Activated CD4-positive, alpha-beta memory T cell treated with anti-CD3 and anti-CD28 coated beads, Interleukin-2, amount 10 ng/mL, durations not matched to agents 7 days and 5 days (primary cell): ENCODE measurements at regions of chr4 and their contacts with region 1.

Region 1: GRCh38 chr4:47122592-47123291 is 91.4 kb downstream of the GABRB1 start:
- DNase-seq: peak; percentile 52
- H3K4me3 Mint-ChIP-seq: no peak overlapping the region
- H3K27ac Mint-ChIP-seq: no peak overlapping the region
- H3K4me1 Mint-ChIP-seq: no peaks in the 10 kb centered on the region
- H3K27me3 Mint-ChIP-seq: no peaks in the 10 kb centered on the region

Region 2: DNA sequence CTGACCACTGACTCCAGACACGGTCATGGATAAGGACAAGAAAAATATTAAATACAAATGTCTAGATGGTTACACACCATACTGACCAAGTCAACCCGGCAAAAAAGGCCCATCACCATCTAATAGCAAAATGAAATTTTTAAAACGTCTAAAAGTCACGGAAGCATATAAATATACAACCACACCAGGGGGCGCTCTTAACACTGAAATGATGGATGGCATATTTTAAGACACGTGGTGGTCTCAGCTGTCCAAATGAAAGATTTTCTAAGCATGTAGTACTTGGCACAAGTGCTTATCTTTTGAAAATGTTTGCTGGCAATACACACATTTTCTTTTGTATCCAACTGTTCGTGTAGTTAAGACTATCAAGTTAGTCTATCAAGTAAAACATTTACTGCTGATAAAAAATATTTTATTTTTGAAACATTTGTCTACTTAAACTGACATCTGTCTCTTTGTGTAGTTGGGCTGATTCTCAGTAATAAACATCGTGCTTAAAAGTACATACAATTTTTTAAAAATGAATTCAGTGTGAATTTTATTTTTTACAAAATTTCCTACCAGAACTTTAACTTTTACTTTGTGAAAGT is 278.3 kb before region 1 on chr4:
- CTCF ChIA-PET with region 1: interaction called, 10 read pairs
- POLR2A ChIA-PET with region 1: no interaction called
- DNase-seq: peak; percentile 35
- H3K4me3 Mint-ChIP-seq: no peak overlapping the region
- H3K27ac Mint-ChIP-seq: no peak overlapping the region
- H3K4me1 Mint-ChIP-seq: no peaks in the 10 kb centered on the region
- H3K27me3 Mint-ChIP-seq: peaks cover 5% of the 10 kb centered on the region